T-cell (primary cell): ENCODE measurements at regions of chr14 and their contacts with region 1.

Region 1: GRCh38 chr14:63960926-63961567 is 108.2 kb downstream of the SYNE2 start:
- DNase-seq: no peak
- ATAC-seq: no peak
- H3K4me3 ChIP-seq: no peak overlapping the region
- H3K4me3 Mint-ChIP-seq: no peak overlapping the region
- H3K27ac ChIP-seq: no peak overlapping the region
- H3K27ac Mint-ChIP-seq: no peak overlapping the region
- H3K4me1 ChIP-seq: no peaks in the 10 kb centered on the region
- H3K4me1 Mint-ChIP-seq: no peaks in the 10 kb centered on the region
- H3K27me3 ChIP-seq: no peaks in the 10 kb centered on the region
- H3K27me3 Mint-ChIP-seq: no peaks in the 10 kb centered on the region

Region 2: DNA sequence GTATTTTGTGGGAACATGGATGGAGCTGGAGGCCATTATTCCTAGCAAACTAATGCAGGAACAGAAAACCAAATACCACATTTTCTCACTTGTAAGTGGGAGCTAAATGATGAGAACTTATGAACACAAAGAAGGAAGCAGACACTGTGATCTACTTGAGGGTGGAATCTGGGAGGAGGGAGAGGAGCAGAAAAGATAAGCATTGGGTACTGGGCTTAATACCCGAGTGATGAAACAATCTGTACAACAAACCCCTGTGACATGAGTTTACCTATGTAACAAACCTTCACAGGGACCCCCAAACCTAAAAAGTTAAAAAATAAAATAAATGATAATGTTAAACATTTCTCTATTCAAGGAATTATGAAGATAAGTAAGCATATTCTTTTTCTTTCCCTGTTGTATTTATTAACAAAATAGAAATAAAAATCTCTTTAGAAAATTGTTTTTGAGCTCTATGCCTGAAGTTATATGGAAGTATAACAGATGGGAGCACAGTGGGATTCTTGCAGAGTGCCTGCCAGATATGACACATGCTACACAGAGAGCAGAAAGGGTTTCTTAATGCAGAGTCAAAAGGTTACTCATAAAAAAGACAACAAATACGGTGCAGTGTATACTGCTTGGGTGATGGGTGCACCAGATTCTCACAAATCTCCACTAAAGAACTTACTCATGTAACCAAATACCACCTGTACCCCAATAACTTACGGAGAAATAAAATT is 160.2 kb before region 1 on chr14:
- CTCF ChIA-PET with region 1: no interaction called
- POLR2A ChIA-PET with region 1: no interaction called
- DNase-seq: no peak
- ATAC-seq: no peak
- H3K4me3 ChIP-seq: no peak overlapping the region
- H3K4me3 Mint-ChIP-seq: no peak overlapping the region
- H3K27ac ChIP-seq: no peak overlapping the region
- H3K27ac Mint-ChIP-seq: no peak overlapping the region
- H3K4me1 ChIP-seq: peaks cover 0 to 2% of the 10 kb centered on the region in 2 experiments
- H3K4me1 Mint-ChIP-seq: peaks cover 0 to 4% (median 4%) of the 10 kb centered on the region in 3 donors
- H3K27me3 ChIP-seq: no peaks in the 10 kb centered on the region
- H3K27me3 Mint-ChIP-seq: peaks cover 0 to 3% of the 10 kb centered on the region in 2 donors

Region 3: GRCh38 chr14:63910583-63911363 is 50.3 kb before region 1 on chr14:
- CTCF ChIA-PET with region 1: no interaction called
- POLR2A ChIA-PET with region 1: no interaction called
- DNase-seq: no peak
- ATAC-seq: no peak
- H3K4me3 ChIP-seq: no peak overlapping the region
- H3K4me3 Mint-ChIP-seq: no peak overlapping the region
- H3K27ac ChIP-seq: no peak overlapping the region
- H3K27ac Mint-ChIP-seq: peak overlapping the region; percentile 53 to 71
- H3K4me1 ChIP-seq: peaks cover 0 to 5% of the 10 kb centered on the region in 2 experiments
- H3K4me1 Mint-ChIP-seq: peaks cover 37 to 75% (median 70%) of the 10 kb centered on the region in 3 donors
- H3K27me3 ChIP-seq: no peaks in the 10 kb centered on the region
- H3K27me3 Mint-ChIP-seq: no peaks in the 10 kb centered on the region

Region 4: GRCh38 chr14:63938198-63939005 is 22.6 kb before region 1 on chr14:
- CTCF ChIA-PET with region 1: no interaction called
- POLR2A ChIA-PET with region 1: interaction called in 1 of 2 experiments, 12 read pairs
- DNase-seq: peak in 18 of 35 experiments; percentile 1 to 43 (median 10)
- ATAC-seq: peak; percentile 44 to 80 (median 64)
- H3K4me3 ChIP-seq: no peak overlapping the region
- H3K4me3 Mint-ChIP-seq: no peak overlapping the region
- H3K27ac ChIP-seq: peak overlapping the region; percentile 55
- H3K27ac Mint-ChIP-seq: no peak overlapping the region
- H3K4me1 ChIP-seq: peaks cover 36 to 39% of the 10 kb centered on the region in 2 experiments
- H3K4me1 Mint-ChIP-seq: peaks cover 37 to 50% (median 41%) of the 10 kb centered on the region in 3 donors
- H3K27me3 ChIP-seq: no peaks in the 10 kb centered on the region
- H3K27me3 Mint-ChIP-seq: no peaks in the 10 kb centered on the region

Region 5: DNA sequence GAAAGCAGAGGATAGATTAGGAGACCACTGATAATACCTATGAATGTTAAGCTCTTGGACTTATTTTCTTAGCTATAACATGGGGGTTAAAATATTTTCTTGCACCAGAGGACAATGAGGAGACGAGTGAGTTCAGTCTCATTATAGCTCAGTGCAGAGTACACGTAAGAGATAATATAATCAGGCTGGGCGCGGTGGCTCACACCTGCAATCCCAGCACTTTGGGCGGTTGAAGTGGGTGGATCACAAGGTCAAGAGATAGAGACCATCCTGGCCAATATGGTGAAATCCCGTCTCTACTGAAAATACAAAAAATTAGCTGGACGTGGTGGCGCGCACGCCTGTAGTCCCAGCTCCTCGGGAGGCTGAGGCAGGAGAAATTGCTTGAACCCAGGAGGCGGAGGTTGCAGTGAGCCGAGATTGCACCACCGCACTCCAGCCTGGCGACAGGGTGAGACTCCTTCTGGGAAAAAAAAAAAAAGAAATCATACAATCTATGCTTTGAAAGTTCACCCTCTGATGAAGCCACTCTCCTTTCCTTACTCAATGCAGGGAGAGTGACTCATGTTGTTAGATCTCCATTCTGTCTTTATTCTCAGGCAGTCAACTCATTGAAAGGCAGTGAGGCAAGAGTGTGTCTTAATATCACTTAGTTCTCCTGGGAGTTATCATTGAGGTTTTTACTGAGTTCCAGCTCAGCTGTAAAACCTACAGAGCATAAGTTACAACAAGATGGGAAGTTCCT is 25.9 kb after region 1 on chr14:
- CTCF ChIA-PET with region 1: interaction called in 1 of 2 experiments, 3 read pairs
- POLR2A ChIA-PET with region 1: interaction called in 1 of 2 experiments, 10 read pairs
- DNase-seq: no peak
- ATAC-seq: no peak
- H3K4me3 ChIP-seq: no peak overlapping the region
- H3K4me3 Mint-ChIP-seq: no peak overlapping the region
- H3K27ac ChIP-seq: no peak overlapping the region
- H3K27ac Mint-ChIP-seq: no peak overlapping the region
- H3K4me1 ChIP-seq: peaks cover 0 to 2% of the 10 kb centered on the region in 2 experiments
- H3K4me1 Mint-ChIP-seq: peaks cover 0 to 4% (median 2%) of the 10 kb centered on the region in 3 donors
- H3K27me3 ChIP-seq: no peaks in the 10 kb centered on the region
- H3K27me3 Mint-ChIP-seq: no peaks in the 10 kb centered on the region